RWPE1 (cell line): ENCODE measurements at regions of chr15 and their contacts with region 1.

Region 1: GRCh38 chr15:74127260-74127953 is 3.0 kb upstream of the ISLR2 start:
- DNase-seq: peak; percentile 79
- H3K27ac ChIP-seq: no peak overlapping the region
- CTCF ChIP-seq: peak; percentile 99

Region 2: GRCh38 chr15:74307827-74308644 is 180.6 kb after region 1 on chr15:
- CTCF ChIA-PET with region 1: interaction called, 47 read pairs
- POLR2A ChIA-PET with region 1: no interaction called
- DNase-seq: peak; percentile 84
- H3K27ac ChIP-seq: no peak overlapping the region
- CTCF ChIP-seq: peak; percentile 76

Region 3: GRCh38 chr15:74322181-74323076 is 195.0 kb after region 1 on chr15:
- CTCF ChIA-PET with region 1: interaction called, 16 read pairs
- POLR2A ChIA-PET with region 1: no interaction called
- DNase-seq: peak; percentile 82
- H3K27ac ChIP-seq: no peak overlapping the region
- CTCF ChIP-seq: peak; percentile 94